Adrenal gland (tissue), 19 donors: ENCODE measurements at regions of chr6 and their contacts with region 1.

Region 1: DNA sequence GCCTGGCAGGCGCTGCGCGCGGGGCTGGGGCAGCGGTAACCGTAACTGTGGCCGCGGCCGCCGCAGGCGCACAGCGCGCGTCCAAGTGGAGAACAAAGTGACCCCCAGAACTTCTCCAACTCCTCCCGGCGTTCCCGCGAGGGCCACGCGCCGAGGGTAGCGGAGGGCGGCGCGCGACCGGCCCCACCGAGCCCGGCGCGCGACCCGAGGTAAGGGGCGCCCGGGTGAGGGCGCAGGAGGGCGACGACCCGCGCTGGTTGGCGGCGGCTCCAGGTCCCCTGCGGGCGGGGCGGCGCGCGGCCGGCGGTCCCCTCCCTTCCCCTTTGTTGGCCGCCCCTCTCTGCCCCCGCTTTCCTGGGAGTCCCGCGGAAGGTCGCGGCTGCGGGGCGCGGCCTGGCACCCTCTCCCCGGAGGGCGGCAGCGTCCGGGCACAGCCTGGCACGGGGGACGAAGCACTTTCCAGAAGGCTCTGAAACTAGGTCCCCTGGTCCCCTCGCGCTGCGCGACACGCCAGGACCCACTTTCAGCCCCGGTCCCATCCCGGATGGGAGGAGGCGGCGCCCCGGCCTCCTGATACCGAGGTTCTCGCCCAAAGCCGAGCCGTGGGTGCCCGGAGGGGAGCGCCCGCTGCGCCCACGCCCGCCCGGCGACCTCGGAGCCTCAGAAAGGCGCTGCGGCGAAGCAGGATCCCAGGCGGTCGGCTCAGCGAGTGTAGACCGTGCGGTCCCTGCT is at the start of gene TIAM2:
- DNase-seq: peak in 6 of 7 donors; percentile 9 to 35 (median 26)
- H3K4me3 ChIP-seq: peak within 1 kb of the TSS in 2 of 4 donors; percentile 43 to 71
- H3K27ac ChIP-seq: no peak within 1 kb of the TSS
- H3K4me1 ChIP-seq: peaks cover 0 to 6% of the 10 kb centered on the region in 2 donors
- H3K27me3 ChIP-seq: no peaks in the 10 kb centered on the region
- CTCF ChIP-seq: no peak
- POLR2A ChIP-seq: peak in 1 of 2 donors; percentile 12
- total RNA-seq, gene TIAM2: 4.0 to 24.7 (median 10.2) TPM

Region 2: GRCh38 chr6:154842833-154843232 is 152.6 kb before region 1 on chr6:
- intact Hi-C with region 1: no loop called
- DNase-seq: no peak
- H3K4me3 ChIP-seq: no peak overlapping the region
- H3K27ac ChIP-seq: no peak overlapping the region
- H3K4me1 ChIP-seq: peaks cover 6 to 21% of the 10 kb centered on the region in 2 donors
- H3K27me3 ChIP-seq: no peaks in the 10 kb centered on the region
- CTCF ChIP-seq: no peak
- POLR2A ChIP-seq: no peak

Region 3: GRCh38 chr6:154951345-154952200 is 43.9 kb before region 1 on chr6:
- intact Hi-C with region 1: no loop called
- DNase-seq: no peak
- H3K4me3 ChIP-seq: no peak overlapping the region
- H3K27ac ChIP-seq: no peak overlapping the region
- H3K4me1 ChIP-seq: no peaks in the 10 kb centered on the region
- H3K27me3 ChIP-seq: no peaks in the 10 kb centered on the region
- CTCF ChIP-seq: no peak
- POLR2A ChIP-seq: no peak

Region 4: GRCh38 chr6:155079985-155080452 is 84.6 kb after region 1 on chr6:
- intact Hi-C with region 1: no loop called
- DNase-seq: peak in 1 of 7 donors; percentile 45
- H3K4me3 ChIP-seq: no peak overlapping the region
- H3K27ac ChIP-seq: no peak overlapping the region
- H3K4me1 ChIP-seq: peaks cover 8 to 10% of the 10 kb centered on the region in 2 donors
- H3K27me3 ChIP-seq: no peaks in the 10 kb centered on the region
- CTCF ChIP-seq: no peak
- POLR2A ChIP-seq: no peak

Region 5: GRCh38 chr6:155162672-155163071 is 167.2 kb after region 1 on chr6:
- intact Hi-C with region 1: loop called in 1 of 2 experiments (anchors 10 kb)
- DNase-seq: no peak
- H3K4me3 ChIP-seq: no peak overlapping the region
- H3K27ac ChIP-seq: no peak overlapping the region
- H3K4me1 ChIP-seq: peaks cover 0 to 6% of the 10 kb centered on the region in 2 donors
- H3K27me3 ChIP-seq: no peaks in the 10 kb centered on the region
- CTCF ChIP-seq: no peak
- POLR2A ChIP-seq: no peak